ENCODE measurements at regions of chr6 and their contacts with region 1.

Region 1: GRCh38 chr6:33579828-33580714 is at the start of gene BAK1:
- ATAC-seq: peak; percentile 92 to 99 (median 98)
- H3K4me3 ChIP-seq: peak within 1 kb of the TSS; percentile 61 to 98 (median 91)
- H3K27ac ChIP-seq: peak within 1 kb of the TSS; percentile 75 to 87
- H3K4me1 ChIP-seq: peaks cover 11 to 12% of the 10 kb centered on the region in 2 donors
- total RNA-seq, gene BAK1: 6.6 to 24.8 (median 11.1) TPM

Region 2: GRCh38 chr6:33467091-33467490 is 113.0 kb before region 1 on chr6:
- in situ Hi-C with region 1: no loop called
- ATAC-seq: no peak
- H3K4me3 ChIP-seq: no peak overlapping the region
- H3K27ac ChIP-seq: no peak overlapping the region
- H3K4me1 ChIP-seq: no peaks in the 10 kb centered on the region

Region 3: DNA sequence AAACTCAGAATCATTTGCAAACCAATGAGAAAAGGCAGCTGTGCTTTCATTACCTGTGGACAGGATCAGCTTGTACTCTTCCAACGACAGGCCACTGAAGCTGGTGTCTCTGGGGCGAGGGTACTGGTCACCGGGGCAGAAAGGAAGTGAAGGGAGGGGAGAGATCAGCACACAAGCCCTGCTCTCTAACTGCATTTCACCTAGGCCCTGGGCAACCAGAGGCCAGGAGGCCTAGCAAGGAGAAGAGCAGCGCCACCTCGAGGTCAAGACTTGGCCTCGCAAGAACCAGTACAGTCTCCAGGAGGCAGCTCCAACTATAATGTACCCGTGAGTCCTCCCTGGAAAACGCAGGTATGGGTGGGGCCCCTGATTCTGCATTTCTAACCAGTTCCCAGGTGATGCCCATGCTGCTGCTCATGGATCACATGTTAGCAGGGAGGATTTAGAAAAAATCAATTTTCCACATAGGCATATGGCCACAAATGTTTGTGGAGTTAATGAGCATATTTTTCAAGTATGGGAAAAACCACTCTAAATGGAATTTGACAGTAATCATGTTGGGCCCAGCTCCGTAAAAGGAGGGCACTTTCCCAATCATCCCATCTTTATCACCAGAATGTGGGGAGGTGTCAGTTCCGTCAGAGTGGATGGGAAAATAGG is 120.5 kb after region 1 on chr6:
- in situ Hi-C with region 1: loop called in 3 of 9 experiments (anchors 10 kb)
- ATAC-seq: peak; percentile 59 to 87 (median 80)
- H3K4me3 ChIP-seq: no peak overlapping the region
- H3K27ac ChIP-seq: no peak overlapping the region
- H3K4me1 ChIP-seq: peaks cover 31 to 43% of the 10 kb centered on the region in 2 donors

Measured in motor neuron (in vitro differentiated cells).